B cell (primary cell): ENCODE measurements at regions of chr17 and their contacts with region 1.

Region 1: DNA sequence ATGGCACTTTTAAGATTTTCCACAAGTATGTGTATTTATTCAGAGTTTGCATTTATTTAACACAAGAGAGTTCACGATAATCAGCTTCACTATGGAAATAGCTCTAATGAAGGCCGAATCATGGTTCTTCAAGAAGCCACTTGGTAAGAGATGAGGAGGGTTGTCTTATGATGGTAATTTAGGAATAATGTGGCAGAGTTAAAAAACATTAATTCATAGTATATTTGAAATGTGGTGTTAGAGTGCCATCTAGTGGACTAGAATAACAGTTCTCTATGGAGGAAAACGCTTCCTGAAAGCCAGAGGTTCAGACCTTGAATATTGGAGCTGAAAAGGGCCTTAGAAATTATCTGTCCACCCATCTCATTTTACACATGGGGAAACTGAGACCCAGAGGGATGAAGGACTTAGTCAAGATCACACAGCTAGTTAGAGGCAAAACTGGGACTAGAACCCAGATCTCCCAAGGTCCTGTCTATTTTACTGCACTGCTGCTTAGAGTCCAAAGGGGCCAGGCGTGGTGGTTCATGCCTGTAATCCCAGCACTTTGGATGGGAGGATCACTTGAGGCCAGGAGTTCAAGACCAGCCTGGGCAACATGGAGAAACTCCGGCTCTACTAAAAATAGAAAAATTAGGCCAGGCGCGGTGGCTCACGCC is 33.8 kb upstream of the KPNB1 start:
- DNase-seq: peak; percentile 72
- ATAC-seq: peak; percentile 21
- H3K4me3 ChIP-seq: no peak overlapping the region
- H3K4me3 Mint-ChIP-seq: no peak overlapping the region
- H3K27ac ChIP-seq: no peak overlapping the region
- H3K27ac Mint-ChIP-seq: no peak overlapping the region
- H3K4me1 ChIP-seq: no peaks in the 10 kb centered on the region
- H3K4me1 Mint-ChIP-seq: no peaks in the 10 kb centered on the region
- H3K27me3 ChIP-seq: no peaks in the 10 kb centered on the region
- H3K27me3 Mint-ChIP-seq: no peaks in the 10 kb centered on the region
- CTCF ChIP-seq: peak; percentile 90

Region 2: DNA sequence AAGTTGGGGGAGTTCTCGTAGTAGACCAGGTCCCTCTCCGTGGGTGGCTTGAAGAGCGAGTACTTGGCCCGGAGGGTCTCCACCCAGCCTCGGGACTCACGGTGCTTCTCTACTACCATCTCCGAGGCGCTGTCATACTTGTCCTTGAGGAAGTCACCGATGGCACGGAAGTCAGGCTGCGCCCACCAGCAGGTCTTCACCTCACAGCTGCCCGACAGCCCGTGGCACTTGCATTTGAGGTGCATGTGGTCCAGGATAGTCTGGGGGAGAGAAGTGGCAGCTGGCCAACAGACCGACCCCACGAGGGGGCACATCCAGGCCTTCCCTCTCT is 847.4 kb before region 1 on chr17:
- CTCF ChIA-PET with region 1: no interaction called
- POLR2A ChIA-PET with region 1: no interaction called
- intact Hi-C with region 1: no loop called
- DNase-seq: no peak
- ATAC-seq: no peak
- H3K4me3 ChIP-seq: no peak overlapping the region
- H3K4me3 Mint-ChIP-seq: no peak overlapping the region
- H3K27ac ChIP-seq: no peak overlapping the region
- H3K27ac Mint-ChIP-seq: no peak overlapping the region
- H3K4me1 ChIP-seq: peaks cover 25 to 34% of the 10 kb centered on the region in 2 donors
- H3K4me1 Mint-ChIP-seq: peaks cover 27% of the 10 kb centered on the region
- H3K27me3 ChIP-seq: peaks cover 0 to 22% (median 0%) of the 10 kb centered on the region in 4 experiments
- H3K27me3 Mint-ChIP-seq: no peaks in the 10 kb centered on the region
- CTCF ChIP-seq: no peak

Region 3: DNA sequence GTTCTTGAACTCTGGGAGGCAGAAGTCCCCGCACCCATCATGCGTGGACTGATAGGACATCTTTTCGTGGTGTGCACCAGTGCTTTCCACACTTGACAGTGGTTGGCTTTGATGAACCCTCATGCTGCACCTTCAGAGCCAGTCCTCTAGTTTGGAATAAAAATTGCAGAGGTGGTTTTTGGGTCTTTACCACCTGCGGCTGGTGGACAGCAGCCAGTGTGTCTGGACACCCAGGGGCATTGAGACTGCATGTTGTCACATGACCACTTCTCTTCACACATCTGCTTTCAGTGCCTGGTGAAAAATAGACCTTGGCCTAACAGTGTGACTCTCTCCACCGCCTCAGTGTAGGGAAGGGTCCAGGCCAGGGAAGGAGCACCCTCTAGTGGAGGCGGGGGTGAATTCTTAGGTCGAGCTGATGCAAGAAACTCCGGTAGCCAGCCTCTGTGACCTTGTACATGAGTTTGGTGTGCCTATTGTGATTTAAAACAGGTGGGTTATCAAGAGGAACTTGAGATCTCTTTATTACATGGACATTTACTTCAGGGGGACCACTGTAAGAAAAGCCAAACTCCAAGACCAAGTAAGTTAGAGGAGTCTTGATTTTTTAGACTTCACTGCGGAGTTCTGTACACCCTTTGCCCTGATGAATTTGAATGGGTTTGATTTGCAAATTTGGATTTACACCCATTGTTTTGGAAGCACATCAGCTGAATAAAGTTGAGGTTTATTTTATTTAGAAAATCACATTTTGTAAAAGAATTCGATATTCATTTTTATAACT is 675.1 kb before region 1 on chr17:
- CTCF ChIA-PET with region 1: interaction called, 10 read pairs
- POLR2A ChIA-PET with region 1: no interaction called
- intact Hi-C with region 1: no loop called
- DNase-seq: peak; percentile 76
- ATAC-seq: peak; percentile 85
- H3K4me3 ChIP-seq: no peak overlapping the region
- H3K4me3 Mint-ChIP-seq: no peak overlapping the region
- H3K27ac ChIP-seq: no peak overlapping the region
- H3K27ac Mint-ChIP-seq: no peak overlapping the region
- H3K4me1 ChIP-seq: peaks cover 5 to 19% of the 10 kb centered on the region in 2 donors
- H3K4me1 Mint-ChIP-seq: peaks cover 17% of the 10 kb centered on the region
- H3K27me3 ChIP-seq: no peaks in the 10 kb centered on the region
- H3K27me3 Mint-ChIP-seq: no peaks in the 10 kb centered on the region
- CTCF ChIP-seq: peak; percentile 82

Region 4: GRCh38 chr17:47229535-47230443 is 386.1 kb before region 1 on chr17:
- CTCF ChIA-PET with region 1: interaction called, 16 read pairs
- POLR2A ChIA-PET with region 1: no interaction called
- intact Hi-C with region 1: loop called (anchors 1 kb)
- DNase-seq: peak; percentile 86
- ATAC-seq: peak; percentile 92
- H3K4me3 ChIP-seq: peak overlapping the region; percentile 6 to 42 (median 35)
- H3K4me3 Mint-ChIP-seq: peak overlapping the region; percentile 77
- H3K27ac ChIP-seq: no peak overlapping the region
- H3K27ac Mint-ChIP-seq: peak overlapping the region; percentile 57
- H3K4me1 ChIP-seq: peaks cover 22 to 23% of the 10 kb centered on the region in 2 donors
- H3K4me1 Mint-ChIP-seq: peaks cover 28% of the 10 kb centered on the region
- H3K27me3 ChIP-seq: no peaks in the 10 kb centered on the region
- H3K27me3 Mint-ChIP-seq: no peaks in the 10 kb centered on the region
- CTCF ChIP-seq: peak; percentile 97

Region 5: GRCh38 chr17:47363171-47363570 is 252.7 kb before region 1 on chr17:
- CTCF ChIA-PET with region 1: interaction called, 31 read pairs
- POLR2A ChIA-PET with region 1: no interaction called
- intact Hi-C with region 1: no loop called
- DNase-seq: no peak
- ATAC-seq: no peak
- H3K4me3 ChIP-seq: no peak overlapping the region
- H3K4me3 Mint-ChIP-seq: no peak overlapping the region
- H3K27ac ChIP-seq: no peak overlapping the region
- H3K27ac Mint-ChIP-seq: no peak overlapping the region
- H3K4me1 ChIP-seq: no peaks in the 10 kb centered on the region
- H3K4me1 Mint-ChIP-seq: no peaks in the 10 kb centered on the region
- H3K27me3 ChIP-seq: no peaks in the 10 kb centered on the region
- H3K27me3 Mint-ChIP-seq: no peaks in the 10 kb centered on the region
- CTCF ChIP-seq: no peak

Region 6: DNA sequence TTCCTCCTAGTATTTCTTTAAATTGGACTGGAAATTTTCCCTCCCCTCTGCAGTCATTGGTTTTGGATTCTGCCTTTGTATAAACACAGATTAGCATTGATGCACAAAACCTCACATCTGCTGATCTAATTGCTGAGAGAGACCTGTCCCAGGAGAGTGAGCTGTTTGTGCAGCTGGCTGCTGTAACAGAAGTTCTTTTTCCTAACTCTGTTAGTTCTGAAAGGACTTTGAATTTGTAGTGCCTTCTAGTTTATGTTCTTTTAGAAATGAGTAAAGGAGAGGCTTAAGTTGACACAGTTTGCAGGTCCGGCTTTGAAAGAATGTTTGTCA is 11.3 kb before region 1 on chr17:
- CTCF ChIA-PET with region 1: interaction called, 12 read pairs
- POLR2A ChIA-PET with region 1: no interaction called
- intact Hi-C with region 1: no loop called
- DNase-seq: no peak
- ATAC-seq: no peak
- H3K4me3 ChIP-seq: no peak overlapping the region
- H3K4me3 Mint-ChIP-seq: no peak overlapping the region
- H3K27ac ChIP-seq: no peak overlapping the region
- H3K27ac Mint-ChIP-seq: no peak overlapping the region
- H3K4me1 ChIP-seq: no peaks in the 10 kb centered on the region
- H3K4me1 Mint-ChIP-seq: no peaks in the 10 kb centered on the region
- H3K27me3 ChIP-seq: no peaks in the 10 kb centered on the region
- H3K27me3 Mint-ChIP-seq: no peaks in the 10 kb centered on the region
- CTCF ChIP-seq: no peak

Region 7: DNA sequence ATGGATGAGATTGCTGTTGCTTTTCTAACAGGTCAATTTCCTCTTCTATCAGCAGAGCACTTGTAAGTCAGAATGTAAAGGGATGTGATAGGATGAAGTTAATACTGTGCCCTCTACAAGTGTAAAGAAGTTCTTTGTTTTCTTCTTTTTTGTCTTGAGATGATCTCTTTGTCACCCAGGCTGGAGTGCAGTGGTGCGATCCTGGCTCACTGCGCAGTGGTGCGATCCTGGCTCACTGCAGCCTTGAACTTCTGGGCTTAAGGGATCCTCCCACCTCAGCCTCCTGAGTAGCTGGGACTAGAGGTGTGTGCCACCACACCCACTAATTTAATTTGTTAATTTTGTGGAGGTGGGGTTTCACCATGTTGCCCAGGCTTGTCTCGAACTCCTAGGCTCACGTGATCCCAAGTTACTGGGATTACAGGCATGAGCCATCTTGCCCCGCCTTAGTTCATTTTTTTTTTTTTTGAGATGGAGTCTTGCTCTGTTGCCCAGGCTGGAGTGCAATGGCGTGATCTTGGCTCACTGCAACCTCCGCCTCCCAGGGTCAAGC is 12.2 kb after region 1 on chr17:
- CTCF ChIA-PET with region 1: interaction called, 28 read pairs
- POLR2A ChIA-PET with region 1: no interaction called
- intact Hi-C with region 1: no loop called
- DNase-seq: no peak
- ATAC-seq: no peak
- H3K4me3 ChIP-seq: no peak overlapping the region
- H3K4me3 Mint-ChIP-seq: no peak overlapping the region
- H3K27ac ChIP-seq: no peak overlapping the region
- H3K27ac Mint-ChIP-seq: no peak overlapping the region
- H3K4me1 ChIP-seq: no peaks in the 10 kb centered on the region
- H3K4me1 Mint-ChIP-seq: no peaks in the 10 kb centered on the region
- H3K27me3 ChIP-seq: no peaks in the 10 kb centered on the region
- H3K27me3 Mint-ChIP-seq: no peaks in the 10 kb centered on the region
- CTCF ChIP-seq: no peak

Region 8: DNA sequence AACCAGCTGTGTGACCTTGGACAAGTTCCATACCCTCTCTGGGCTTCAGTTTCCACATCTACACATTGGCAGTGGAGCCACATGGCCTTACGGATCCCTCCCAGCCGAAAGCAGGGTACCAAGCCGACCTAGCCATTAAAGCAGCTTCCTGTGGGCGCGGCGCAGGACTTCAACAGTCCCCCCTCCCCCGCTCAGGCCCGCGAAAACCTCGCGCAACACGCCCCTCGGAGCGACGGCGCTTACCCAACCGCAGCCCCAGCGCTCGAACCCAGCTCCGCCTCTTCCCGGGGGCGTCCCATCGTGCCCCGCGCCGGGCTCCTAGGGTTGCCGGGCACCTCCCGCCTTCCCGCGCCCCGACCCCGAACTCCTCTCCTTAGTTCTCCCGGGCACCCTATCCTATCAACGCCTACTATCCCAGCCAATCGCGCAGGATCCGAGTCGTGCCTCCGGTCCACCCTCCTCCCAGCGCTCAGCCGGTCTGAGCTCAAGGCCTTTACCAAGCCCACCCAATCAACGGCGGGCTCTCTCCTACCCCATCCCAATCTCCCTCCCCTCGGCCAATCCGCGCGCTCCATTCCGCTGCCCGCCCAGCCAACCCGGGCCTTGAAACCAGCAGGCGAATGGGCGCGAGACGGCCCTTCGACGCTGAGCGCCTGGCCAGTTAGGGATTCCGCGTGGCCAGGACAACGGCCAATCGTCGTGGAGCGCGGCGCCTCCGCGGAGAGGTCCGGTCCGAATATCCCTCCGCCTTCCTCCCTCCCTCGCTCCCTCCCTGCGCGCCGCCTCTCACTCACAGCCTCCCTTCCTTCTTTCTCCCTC is 33.5 kb after region 1 on chr17 and contains the start of gene KPNB1:
- CTCF ChIA-PET with region 1: interaction called, 14 read pairs
- POLR2A ChIA-PET with region 1: no interaction called
- intact Hi-C with region 1: no loop called
- DNase-seq: peak; percentile 99
- ATAC-seq: peak; percentile 79
- H3K4me3 ChIP-seq: peak within 1 kb of the TSS; percentile 76 to 93 (median 83)
- H3K4me3 Mint-ChIP-seq: peak within 1 kb of the TSS; percentile 98
- H3K27ac ChIP-seq: peak within 1 kb of the TSS; percentile 76 to 84
- H3K27ac Mint-ChIP-seq: peak within 1 kb of the TSS; percentile 98
- H3K4me1 ChIP-seq: peaks cover 32% of the 10 kb centered on the region in 2 donors
- H3K4me1 Mint-ChIP-seq: peaks cover 44% of the 10 kb centered on the region
- H3K27me3 ChIP-seq: no peaks in the 10 kb centered on the region
- H3K27me3 Mint-ChIP-seq: no peaks in the 10 kb centered on the region
- CTCF ChIP-seq: no peak
- total RNA-seq, gene KPNB1: 269 and 278 TPM in 2 replicates